Left cardiac atrium (tissue), 4 donors: ENCODE measurements at regions of chr20 and their contacts with region 1.

Region 1: GRCh38 chr20:45138561-45139300 is 14.5 kb upstream of the WFDC12 start:
- DNase-seq: peak; percentile 36
- ATAC-seq: no peak

Region 2: DNA sequence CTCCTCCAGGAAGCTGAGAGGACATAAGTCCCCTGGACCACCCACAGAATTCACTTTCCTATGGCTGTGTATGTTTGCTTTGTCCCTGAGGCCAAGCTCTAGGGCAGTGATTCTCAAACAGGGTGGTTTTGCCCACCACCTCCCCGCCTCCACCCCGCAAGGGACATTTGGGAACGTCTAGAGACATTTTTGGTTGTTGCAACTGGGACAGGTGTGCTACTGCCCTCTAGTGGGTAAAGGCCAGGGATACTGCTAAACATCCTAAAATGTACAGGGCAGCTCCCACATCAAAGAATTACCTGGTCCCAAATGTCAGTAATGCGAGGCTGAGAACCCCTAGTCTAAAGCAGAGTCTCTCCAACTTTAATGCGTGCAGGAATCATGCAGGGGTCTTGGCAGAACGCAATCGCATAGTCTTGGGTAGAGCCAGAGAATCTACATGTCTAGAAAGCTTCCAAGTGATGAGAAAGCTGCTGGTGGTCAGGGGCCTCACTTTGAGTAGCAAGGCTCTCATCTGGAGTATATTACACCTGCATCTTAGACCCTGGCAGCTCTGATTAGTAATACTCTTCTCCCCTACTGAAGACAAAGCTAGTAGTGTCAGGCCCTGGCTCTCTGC is 42.9 kb before region 1 on chr20:
- intact Hi-C with region 1: no loop called
- DNase-seq: peak; percentile 58
- ATAC-seq: peak; percentile 39 to 55

Region 3: DNA sequence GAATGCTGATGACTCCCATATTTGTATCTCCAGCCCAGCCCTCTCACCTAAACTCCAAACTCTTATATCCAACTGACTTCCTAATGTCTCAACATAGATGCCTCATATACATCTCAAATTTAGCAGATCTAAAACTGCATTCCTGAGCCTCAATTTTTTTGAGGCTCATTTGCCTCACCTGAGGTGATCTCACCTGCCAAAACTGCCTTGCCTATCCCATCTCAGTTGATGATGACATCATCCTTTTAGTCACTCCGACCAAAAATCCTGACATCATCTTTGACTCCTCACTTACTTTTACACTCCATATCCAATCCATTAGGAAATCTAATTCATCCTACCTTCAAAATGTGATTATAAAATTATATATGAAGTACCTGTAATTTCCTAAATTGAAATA is 141.3 kb after region 1 on chr20:
- intact Hi-C with region 1: loop called in 1 of 2 experiments (anchors 10 kb)
- DNase-seq: no peak
- ATAC-seq: no peak